Activated CD4-positive, alpha-beta memory T cell treated with anti-CD3 and anti-CD28 coated beads for 36 hours (primary cell): ENCODE measurements at regions of chr15 and their contacts with region 1.

Region 1: DNA sequence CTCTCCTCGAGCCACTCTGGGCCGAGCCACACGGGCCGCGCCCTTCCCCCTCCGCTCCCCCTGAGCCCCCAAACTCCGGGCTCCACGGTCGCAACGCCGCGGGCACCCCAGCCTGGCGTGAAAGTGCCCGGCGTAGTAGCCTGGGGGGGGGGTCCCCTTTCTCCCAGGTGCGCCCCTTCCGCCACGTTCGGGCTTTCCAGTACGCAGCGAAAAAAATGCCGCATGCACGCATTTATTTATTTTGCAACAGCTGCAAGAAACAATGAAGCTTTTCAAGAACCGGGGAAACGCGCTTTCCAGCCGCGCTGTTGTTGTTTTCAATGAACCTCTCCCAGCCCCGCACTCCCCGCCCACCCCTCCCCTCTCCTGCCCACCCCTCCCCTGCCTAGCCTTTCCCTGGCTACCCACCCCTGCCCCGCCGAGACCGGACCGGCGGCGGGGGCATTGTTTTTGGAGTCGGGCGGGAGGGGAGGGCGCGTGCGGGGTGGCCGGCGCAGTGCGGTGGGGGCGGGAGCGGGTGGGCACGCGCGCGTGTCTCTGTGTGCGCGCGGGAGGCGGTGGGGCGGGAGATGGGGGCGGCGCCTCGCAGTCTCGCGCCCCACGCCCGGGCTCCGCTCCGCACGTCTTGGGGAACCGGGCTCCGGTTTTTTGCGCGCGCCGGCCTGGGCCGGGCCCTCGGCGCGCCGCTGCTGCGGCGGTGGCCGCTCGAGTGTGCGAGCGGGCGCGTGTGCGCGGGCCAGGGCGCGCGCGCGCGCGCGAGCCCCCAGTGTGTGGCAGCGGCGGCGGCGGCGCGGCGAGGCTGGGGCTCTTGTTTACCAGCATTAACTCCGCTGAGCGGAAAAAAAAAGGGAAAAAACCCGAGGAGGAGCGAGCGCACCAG is at the start of gene IGF1R:
- DNase-seq: peak; percentile 86
- H3K4me3 Mint-ChIP-seq: peak within 1 kb of the TSS; percentile 77
- H3K27ac Mint-ChIP-seq: peak within 1 kb of the TSS; percentile 81
- H3K4me1 Mint-ChIP-seq: peaks cover 22% of the 10 kb centered on the region
- H3K27me3 Mint-ChIP-seq: peaks cover 33% of the 10 kb centered on the region
- total RNA-seq, gene IGF1R: 13.2 to 14.8 TPM

Region 2: DNA sequence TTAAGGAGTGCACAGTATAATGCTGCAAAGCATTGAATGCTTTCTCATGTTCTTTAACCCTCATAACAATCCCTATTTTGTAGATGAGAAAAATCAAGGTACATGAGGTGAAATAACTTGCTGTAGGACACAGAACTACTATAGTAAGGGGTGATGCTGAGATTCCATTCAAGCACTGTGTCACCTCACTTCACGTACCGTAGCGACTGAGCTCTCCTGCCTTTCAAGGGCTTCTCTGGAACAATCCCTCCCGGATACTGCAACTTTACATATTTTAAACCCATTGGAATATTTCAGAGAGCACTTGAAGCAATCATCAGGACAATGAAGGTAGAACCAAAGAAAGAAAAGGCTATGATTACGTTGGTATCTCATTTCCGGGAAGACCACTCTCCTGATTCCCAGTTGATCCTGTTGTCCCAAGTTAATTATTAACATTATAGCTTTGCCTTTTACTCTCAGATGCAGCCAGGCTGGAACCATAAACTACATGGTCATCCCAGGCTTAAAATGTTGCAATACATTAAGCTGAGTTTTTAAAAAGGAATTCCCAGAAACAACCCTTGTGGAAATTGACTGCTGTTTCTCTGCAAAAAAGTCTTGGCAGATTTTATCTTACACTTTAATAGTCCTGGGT is 251.9 kb before region 1 on chr15:
- CTCF ChIA-PET with region 1: no interaction called
- POLR2A ChIA-PET with region 1: no interaction called
- intact Hi-C with region 1: no loop called
- DNase-seq: no peak
- H3K4me3 Mint-ChIP-seq: no peak overlapping the region
- H3K27ac Mint-ChIP-seq: no peak overlapping the region
- H3K4me1 Mint-ChIP-seq: no peaks in the 10 kb centered on the region
- H3K27me3 Mint-ChIP-seq: peaks cover 7% of the 10 kb centered on the region

Region 3: GRCh38 chr15:98476559-98476958 is 171.5 kb before region 1 on chr15:
- CTCF ChIA-PET with region 1: no interaction called
- POLR2A ChIA-PET with region 1: no interaction called
- intact Hi-C with region 1: no loop called
- DNase-seq: no peak
- H3K4me3 Mint-ChIP-seq: no peak overlapping the region
- H3K27ac Mint-ChIP-seq: no peak overlapping the region
- H3K4me1 Mint-ChIP-seq: no peaks in the 10 kb centered on the region
- H3K27me3 Mint-ChIP-seq: peaks cover 2% of the 10 kb centered on the region

Region 4: GRCh38 chr15:98548154-98548971 is 99.7 kb before region 1 on chr15:
- CTCF ChIA-PET with region 1: interaction called, 4 read pairs
- POLR2A ChIA-PET with region 1: no interaction called
- intact Hi-C with region 1: loop called (anchors 1 kb)
- DNase-seq: peak; percentile 67
- H3K4me3 Mint-ChIP-seq: peak overlapping the region; percentile 73
- H3K27ac Mint-ChIP-seq: no peak overlapping the region
- H3K4me1 Mint-ChIP-seq: peaks cover 14% of the 10 kb centered on the region
- H3K27me3 Mint-ChIP-seq: peaks cover 48% of the 10 kb centered on the region

Region 5: GRCh38 chr15:98658831-98659699 is 11.1 kb after region 1 on chr15:
- CTCF ChIA-PET with region 1: interaction called, 11 read pairs
- POLR2A ChIA-PET with region 1: no interaction called
- intact Hi-C with region 1: no loop called
- DNase-seq: peak; percentile 27
- H3K4me3 Mint-ChIP-seq: no peak overlapping the region
- H3K27ac Mint-ChIP-seq: no peak overlapping the region
- H3K4me1 Mint-ChIP-seq: peaks cover 4% of the 10 kb centered on the region
- H3K27me3 Mint-ChIP-seq: peaks cover 8% of the 10 kb centered on the region

Region 6: GRCh38 chr15:98779463-98780071 is 131.6 kb after region 1 on chr15:
- CTCF ChIA-PET with region 1: interaction called, 12 read pairs
- POLR2A ChIA-PET with region 1: no interaction called
- intact Hi-C with region 1: no loop called
- DNase-seq: peak; percentile 82
- H3K4me3 Mint-ChIP-seq: peak overlapping the region; percentile 21
- H3K27ac Mint-ChIP-seq: no peak overlapping the region
- H3K4me1 Mint-ChIP-seq: peaks cover 20% of the 10 kb centered on the region
- H3K27me3 Mint-ChIP-seq: peaks cover 2% of the 10 kb centered on the region

Region 7: DNA sequence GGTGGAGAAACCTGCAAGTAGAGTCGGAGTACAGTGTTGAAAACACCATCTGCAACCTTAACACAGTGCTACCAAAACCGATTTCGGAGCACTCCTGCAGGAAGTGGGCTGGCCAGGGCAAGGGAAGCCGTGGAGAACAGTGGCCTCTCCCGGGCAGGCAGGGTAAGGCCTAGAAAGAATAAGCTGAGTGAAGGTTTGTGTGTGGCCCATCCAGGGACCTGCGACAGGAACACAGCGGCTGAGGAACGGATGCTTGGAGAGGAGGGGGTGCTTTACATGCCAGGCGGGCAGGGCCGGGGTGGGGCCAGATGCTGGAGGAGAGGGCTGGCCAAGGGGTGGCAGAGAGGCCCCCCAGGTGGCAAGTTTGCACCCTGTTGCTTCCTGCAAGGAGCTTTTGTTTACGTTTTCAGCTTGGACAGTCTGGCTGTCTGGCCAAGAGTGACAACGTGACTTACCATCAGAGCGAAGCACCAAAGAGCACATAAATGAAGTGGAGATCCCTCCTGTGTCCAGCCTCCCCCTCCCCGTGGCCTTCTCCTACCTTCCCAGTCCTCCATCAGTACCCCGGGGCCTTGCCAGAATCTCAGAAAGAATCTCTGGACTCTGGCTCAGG is 203.1 kb after region 1 on chr15:
- CTCF ChIA-PET with region 1: interaction called, 5 read pairs
- POLR2A ChIA-PET with region 1: interaction called, 5 read pairs
- intact Hi-C with region 1: loop called (anchors 1 kb)
- DNase-seq: peak; percentile 84
- H3K4me3 Mint-ChIP-seq: peak overlapping the region; percentile 86
- H3K27ac Mint-ChIP-seq: peak overlapping the region; percentile 96
- H3K4me1 Mint-ChIP-seq: peaks cover 39% of the 10 kb centered on the region
- H3K27me3 Mint-ChIP-seq: no peaks in the 10 kb centered on the region

Region 8: GRCh38 chr15:99059010-99059981 is 411.3 kb after region 1 on chr15:
- CTCF ChIA-PET with region 1: no interaction called
- POLR2A ChIA-PET with region 1: no interaction called
- intact Hi-C with region 1: loop called (anchors 5 kb)
- DNase-seq: peak; percentile 54
- H3K4me3 Mint-ChIP-seq: peak overlapping the region; percentile 49
- H3K27ac Mint-ChIP-seq: no peak overlapping the region
- H3K4me1 Mint-ChIP-seq: peaks cover 4% of the 10 kb centered on the region
- H3K27me3 Mint-ChIP-seq: peaks cover 35% of the 10 kb centered on the region